Kidney (tissue), 22 donors: ENCODE measurements at regions of chr1 and their contacts with region 1.

Region 1: DNA sequence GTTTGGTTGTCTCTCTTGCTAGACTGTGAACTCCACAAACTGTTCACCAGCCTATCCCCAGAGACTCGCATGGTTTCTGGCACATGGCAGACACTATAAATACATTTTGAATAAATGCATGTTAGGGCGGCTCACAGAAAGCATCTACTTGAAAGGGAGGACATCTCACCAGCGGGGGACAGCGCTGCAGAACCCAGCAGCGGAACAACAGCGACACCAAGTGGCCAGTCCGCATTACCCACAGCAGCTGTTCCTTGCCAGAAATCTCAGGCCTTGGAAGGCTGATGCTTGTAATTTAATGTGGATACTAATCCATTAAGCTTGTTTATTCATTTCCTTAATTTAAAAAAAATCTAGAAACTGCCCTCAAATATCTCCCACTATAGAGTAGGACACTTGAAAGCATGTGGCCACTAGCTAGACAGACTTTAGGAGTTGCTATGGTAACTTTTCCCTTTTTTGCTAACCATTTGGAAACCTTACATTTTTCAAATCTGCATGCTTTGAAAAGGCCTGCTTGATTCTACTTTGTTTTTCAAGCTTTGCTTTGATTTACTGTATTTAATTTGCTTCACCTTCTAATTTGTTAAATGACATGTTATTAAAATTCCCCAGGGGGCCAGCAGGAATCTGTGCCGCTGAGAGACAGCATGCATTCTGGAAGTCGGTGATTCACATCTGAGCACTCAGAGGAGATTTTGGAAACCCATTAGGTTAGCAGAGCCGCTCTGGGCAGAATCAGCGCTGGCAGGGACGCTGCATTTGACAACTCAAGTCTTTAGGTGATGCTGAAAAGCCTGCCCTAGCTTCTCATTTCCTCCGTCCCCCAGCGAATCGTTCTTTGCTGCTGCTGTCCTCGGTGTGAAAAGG is 63.5 kb upstream of the SSX2IP start:
- DNase-seq: peak; percentile 81 to 89 (median 85)
- H3K4me3 ChIP-seq: no peak overlapping the region
- H3K27ac ChIP-seq: no peak overlapping the region
- H3K4me1 ChIP-seq: peaks cover 0 to 2% (median 0%) of the 10 kb centered on the region in 3 donors
- H3K27me3 ChIP-seq: no peaks in the 10 kb centered on the region
- CTCF ChIP-seq: peak; percentile 95

Region 2: GRCh38 chr1:84433258-84434080 is 320.3 kb before region 1 on chr1:
- intact Hi-C with region 1: loop called (anchors 10 kb)
- DNase-seq: peak; percentile 38 to 86 (median 50)
- H3K4me3 ChIP-seq: peak overlapping the region in 2 of 3 donors; percentile 24 to 40
- H3K27ac ChIP-seq: no peak overlapping the region
- H3K4me1 ChIP-seq: no peaks in the 10 kb centered on the region
- H3K27me3 ChIP-seq: no peaks in the 10 kb centered on the region
- CTCF ChIP-seq: peak; percentile 72